ENCODE measurements at regions of chr17 and their contacts with region 1.

Region 1: GRCh38 chr17:79839363-79840268 is at the start of gene CBX4:
- DNase-seq: peak; percentile 99
- H3K4me3 ChIP-seq: peak within 1 kb of the TSS; percentile 54 to 91
- H3K27ac ChIP-seq: peak within 1 kb of the TSS; percentile 74 to 77
- H3K4me1 ChIP-seq: peaks cover 26 to 63% of the 10 kb centered on the region in 2 experiments
- H3K27me3 ChIP-seq: peaks cover 39% of the 10 kb centered on the region
- CTCF ChIP-seq: peak; percentile 86
- EP300 ChIP-seq: no peak
- RAD21 ChIP-seq: no peak
- polyA plus RNA-seq, gene CBX4: 16.6 and 21.9 TPM in 2 replicates

Region 2: GRCh38 chr17:79777894-79778503 is 61.6 kb before region 1 on chr17 and contains the start of gene CBX2:
- CTCF ChIA-PET with region 1: interaction called, 28 read pairs
- POLR2A ChIA-PET with region 1: interaction called, 8 read pairs
- DNase-seq: peak; percentile 100
- H3K4me3 ChIP-seq: peak within 1 kb of the TSS; percentile 84 to 93
- H3K27ac ChIP-seq: peak within 1 kb of the TSS; percentile 7 to 83; a peak in 2 of 4 replicates
- H3K4me1 ChIP-seq: peaks cover 0 to 20% of the 10 kb centered on the region in 2 experiments; a peak in 3 of 4 replicates
- H3K27me3 ChIP-seq: peaks cover 23% of the 10 kb centered on the region
- CTCF ChIP-seq: peak; percentile 27; the same call in 1 of the 2 replicates
- EP300 ChIP-seq: no peak
- RAD21 ChIP-seq: no peak
- polyA plus RNA-seq, gene CBX2: 19.7 and 22.4 TPM in 2 replicates

Region 3: DNA sequence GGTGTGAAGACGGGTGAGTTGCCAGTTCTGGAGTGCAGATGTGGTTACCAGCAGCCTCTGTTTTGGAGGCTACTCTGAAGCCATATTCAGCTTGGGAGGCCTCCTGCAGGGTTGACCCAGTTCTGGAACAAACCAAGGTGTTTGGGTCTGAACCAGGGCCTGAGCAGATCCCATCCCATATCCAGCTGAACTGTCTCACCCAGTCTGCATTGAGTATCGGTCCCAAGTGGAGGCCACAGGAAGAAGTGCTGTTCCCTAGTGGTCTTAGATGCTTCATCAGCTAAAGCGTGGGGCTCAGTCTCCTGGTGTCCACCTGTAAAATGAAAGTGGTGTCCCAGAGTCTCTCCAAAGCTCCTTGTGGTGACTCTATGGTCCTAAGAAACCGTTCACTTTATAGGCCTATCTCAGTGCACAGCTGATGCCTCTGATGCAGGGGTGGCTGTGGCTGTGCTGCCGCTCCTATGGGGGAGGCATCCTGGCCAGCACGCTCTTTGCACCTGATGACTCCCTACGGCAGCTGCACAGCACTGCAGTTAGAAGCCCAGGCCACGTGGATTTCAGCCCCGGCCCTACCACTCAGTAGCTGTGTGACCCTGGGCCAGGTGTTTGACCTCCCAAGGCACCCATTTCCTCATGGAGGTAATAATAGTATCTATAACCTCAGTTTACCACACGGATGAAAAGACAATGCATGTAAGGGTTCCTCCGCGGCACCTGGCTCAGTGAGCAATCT is 21.4 kb before region 1 on chr17:
- CTCF ChIA-PET with region 1: interaction called, 274 read pairs
- POLR2A ChIA-PET with region 1: interaction called, 93 read pairs
- DNase-seq: no peak
- H3K4me3 ChIP-seq: no peak overlapping the region
- H3K27ac ChIP-seq: no peak overlapping the region
- H3K4me1 ChIP-seq: peaks cover 0 to 9% of the 10 kb centered on the region in 2 experiments; a peak in 1 of 4 replicates
- H3K27me3 ChIP-seq: no peaks in the 10 kb centered on the region
- CTCF ChIP-seq: no peak
- EP300 ChIP-seq: no peak
- RAD21 ChIP-seq: no peak

Region 4: DNA sequence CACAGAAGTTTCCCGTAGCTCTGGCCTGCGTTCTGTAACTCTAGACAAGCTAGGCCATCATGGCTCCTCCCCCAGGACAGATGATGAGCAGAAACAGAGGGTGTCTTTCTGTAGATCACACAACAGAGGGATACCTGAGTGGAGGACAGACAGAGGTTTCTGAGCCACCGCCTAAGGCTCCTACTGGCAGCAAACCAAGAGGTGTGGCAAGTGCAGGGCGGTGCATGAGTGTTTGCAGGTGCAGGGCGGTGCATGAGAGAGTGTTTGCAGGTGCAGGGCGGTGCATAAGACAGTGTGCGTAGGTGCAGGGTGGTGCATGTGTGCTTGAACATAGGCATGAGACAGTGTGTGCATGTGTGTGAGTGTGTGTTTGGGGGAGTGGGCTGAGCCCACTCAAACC is 52.8 kb after region 1 on chr17:
- CTCF ChIA-PET with region 1: interaction called, 92 read pairs
- POLR2A ChIA-PET with region 1: interaction called, 5 read pairs
- DNase-seq: no peak
- H3K4me3 ChIP-seq: no peak overlapping the region
- H3K27ac ChIP-seq: no peak overlapping the region
- H3K4me1 ChIP-seq: peaks cover 0 to 21% of the 10 kb centered on the region in 2 experiments; a peak in 1 of 4 replicates
- H3K27me3 ChIP-seq: peaks cover 22% of the 10 kb centered on the region; the same call in 1 of the 2 replicates
- CTCF ChIP-seq: no peak
- EP300 ChIP-seq: no peak
- RAD21 ChIP-seq: no peak

Region 5: GRCh38 chr17:79923974-79924638 is 84.5 kb after region 1 on chr17:
- CTCF ChIA-PET with region 1: interaction called, 182 read pairs
- POLR2A ChIA-PET with region 1: interaction called, 11 read pairs
- DNase-seq: peak; percentile 78
- H3K4me3 ChIP-seq: no peak overlapping the region; a peak in 1 of 4 replicates
- H3K27ac ChIP-seq: no peak overlapping the region
- H3K4me1 ChIP-seq: peaks cover 4 to 14% of the 10 kb centered on the region in 2 experiments; a peak in 2 of 4 replicates
- H3K27me3 ChIP-seq: no peaks in the 10 kb centered on the region
- CTCF ChIP-seq: peak; percentile 72
- EP300 ChIP-seq: no peak
- RAD21 ChIP-seq: peak; percentile 57

Region 6: DNA sequence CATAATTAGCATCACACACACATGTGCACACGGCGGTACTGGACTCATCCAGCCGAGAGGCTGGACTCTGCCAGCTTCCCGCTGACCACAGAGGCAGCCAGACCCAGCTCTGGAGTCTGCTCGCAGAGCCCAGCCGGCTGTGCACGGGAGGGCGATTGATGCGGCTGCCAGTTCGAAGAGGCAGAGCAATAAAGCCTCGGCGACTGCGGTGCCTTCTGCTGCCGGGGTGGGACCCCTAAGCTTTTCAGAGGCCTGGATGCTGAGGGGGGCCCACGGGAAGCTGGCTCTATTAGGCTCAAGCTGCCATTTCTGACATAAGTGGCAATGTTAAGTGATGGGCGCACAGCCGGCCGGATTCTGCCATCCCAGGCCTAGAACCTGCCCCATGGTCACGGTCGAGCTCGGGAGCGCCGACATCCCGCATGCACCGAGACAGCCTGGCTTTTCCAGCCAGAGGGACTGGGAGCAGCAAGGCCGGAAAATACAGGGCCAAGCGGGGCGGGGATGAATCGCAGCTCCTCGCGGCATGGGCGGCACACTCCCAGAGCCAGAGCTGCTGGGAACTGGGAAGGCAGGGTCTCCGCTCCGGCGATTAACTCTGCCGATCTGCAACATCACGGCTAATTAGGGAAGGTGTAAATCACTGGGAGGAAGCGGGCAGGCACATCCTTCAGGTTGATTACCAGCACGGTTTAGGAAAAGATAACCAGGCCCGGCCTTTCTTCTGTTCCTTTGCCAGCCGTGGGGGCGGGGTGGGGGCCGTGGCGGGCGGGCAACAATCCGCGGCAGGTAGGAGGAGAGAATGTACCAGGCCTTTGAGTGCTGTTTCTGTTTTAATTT is 138.3 kb after region 1 on chr17:
- CTCF ChIA-PET with region 1: interaction called, 50 read pairs
- POLR2A ChIA-PET with region 1: no interaction called
- DNase-seq: peak; percentile 26
- H3K4me3 ChIP-seq: no peak overlapping the region
- H3K27ac ChIP-seq: no peak overlapping the region
- H3K4me1 ChIP-seq: peaks cover 0 to 20% of the 10 kb centered on the region in 2 experiments; a peak in 1 of 4 replicates
- H3K27me3 ChIP-seq: no peaks in the 10 kb centered on the region
- CTCF ChIP-seq: no peak
- EP300 ChIP-seq: no peak
- RAD21 ChIP-seq: no peak

Measured in SK-N-SH (cell line).